Naive thymus-derived CD8-positive, alpha-beta T cell (primary cell): ENCODE measurements at regions of chr4 and their contacts with region 1.

Region 1: DNA sequence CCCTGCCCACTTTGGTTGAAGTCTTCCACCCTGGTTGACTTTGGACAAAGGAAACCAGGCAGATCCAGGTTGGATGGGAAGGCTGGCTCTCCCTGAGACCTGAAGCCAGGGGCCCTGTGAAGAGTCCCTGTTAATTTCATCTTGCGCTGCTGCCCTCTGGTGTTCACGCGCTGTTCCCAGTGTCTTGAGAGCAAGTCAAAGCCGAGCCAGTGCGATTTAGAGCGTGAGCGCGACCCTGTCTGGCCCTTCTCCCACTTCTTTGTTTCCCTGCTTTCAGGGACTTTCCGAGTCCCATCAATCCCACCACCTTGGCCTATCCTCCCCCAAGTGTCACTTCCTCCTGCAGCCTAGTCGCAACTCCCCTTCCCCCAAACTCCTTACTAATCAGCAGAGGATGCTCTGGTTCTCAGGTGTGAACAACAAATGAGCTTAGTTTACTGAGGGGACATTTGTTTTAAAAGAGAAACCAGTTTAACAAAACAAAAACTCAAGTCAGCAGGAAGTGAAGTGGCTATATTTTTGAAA is 25.8 kb upstream of the CHRNA9 start:
- DNase-seq: peak; percentile 81 to 94 (median 87)
- ATAC-seq: peak; percentile 45 to 62
- H3K4me3 Mint-ChIP-seq: peak overlapping the region; percentile 67 to 90 (median 82)
- H3K27ac Mint-ChIP-seq: peak overlapping the region; percentile 97 to 100 (median 99)
- H3K4me1 Mint-ChIP-seq: peaks cover 51 to 86% (median 81%) of the 10 kb centered on the region in 4 donors
- H3K27me3 Mint-ChIP-seq: no peaks in the 10 kb centered on the region

Region 2: GRCh38 chr4:40193016-40193571 is 116.2 kb before region 1 on chr4:
- POLR2A ChIA-PET with region 1: interaction called, 76 read pairs
- DNase-seq: peak in 6 of 10 donors; percentile 51 to 79 (median 74)
- ATAC-seq: peak; percentile 24 to 26
- H3K4me3 Mint-ChIP-seq: peak overlapping the region; percentile 86 to 100 (median 98)
- H3K27ac Mint-ChIP-seq: peak overlapping the region; percentile 94 to 100 (median 99)
- H3K4me1 Mint-ChIP-seq: peaks cover 36 to 83% (median 76%) of the 10 kb centered on the region in 4 donors
- H3K27me3 Mint-ChIP-seq: peaks cover 0 to 1% (median 0%) of the 10 kb centered on the region in 5 donors

Region 3: GRCh38 chr4:40212674-40213527 is 96.4 kb before region 1 on chr4:
- POLR2A ChIA-PET with region 1: interaction called, 22 read pairs
- DNase-seq: no peak
- ATAC-seq: no peak
- H3K4me3 Mint-ChIP-seq: peak overlapping the region; percentile 55 to 100 (median 78)
- H3K27ac Mint-ChIP-seq: peak overlapping the region; percentile 87 to 98 (median 96)
- H3K4me1 Mint-ChIP-seq: peaks cover 51 to 99% (median 94%) of the 10 kb centered on the region in 4 donors
- H3K27me3 Mint-ChIP-seq: no peaks in the 10 kb centered on the region

Region 4: DNA sequence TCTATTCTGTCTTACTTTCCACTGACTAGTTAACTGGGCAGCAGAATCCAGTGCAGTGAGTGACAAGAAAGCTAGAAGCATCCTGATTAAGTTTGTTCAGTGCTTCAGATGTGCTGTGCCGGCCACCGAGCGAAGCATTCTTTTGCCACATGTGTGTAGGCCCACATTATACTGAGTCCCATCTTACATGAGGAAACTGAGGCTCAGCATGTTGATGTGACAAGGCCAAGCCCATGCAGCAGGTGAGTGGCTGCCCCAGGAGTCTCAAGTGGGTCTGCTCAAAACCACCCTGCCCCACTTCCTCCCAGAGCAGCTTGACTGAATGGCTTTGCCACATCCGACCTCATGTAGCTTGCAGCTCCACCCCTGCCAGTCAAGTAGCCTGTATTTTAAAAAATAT is 62.0 kb before region 1 on chr4:
- POLR2A ChIA-PET with region 1: interaction called, 31 read pairs
- DNase-seq: peak in 9 of 10 donors; percentile 52 to 86 (median 70)
- ATAC-seq: peak; percentile 69 to 86
- H3K4me3 Mint-ChIP-seq: peak overlapping the region in 9 of 10 donors; percentile 49 to 84 (median 76)
- H3K27ac Mint-ChIP-seq: peak overlapping the region; percentile 94 to 98 (median 96)
- H3K4me1 Mint-ChIP-seq: peaks cover 53 to 90% (median 82%) of the 10 kb centered on the region in 4 donors
- H3K27me3 Mint-ChIP-seq: no peaks in the 10 kb centered on the region

Region 5: DNA sequence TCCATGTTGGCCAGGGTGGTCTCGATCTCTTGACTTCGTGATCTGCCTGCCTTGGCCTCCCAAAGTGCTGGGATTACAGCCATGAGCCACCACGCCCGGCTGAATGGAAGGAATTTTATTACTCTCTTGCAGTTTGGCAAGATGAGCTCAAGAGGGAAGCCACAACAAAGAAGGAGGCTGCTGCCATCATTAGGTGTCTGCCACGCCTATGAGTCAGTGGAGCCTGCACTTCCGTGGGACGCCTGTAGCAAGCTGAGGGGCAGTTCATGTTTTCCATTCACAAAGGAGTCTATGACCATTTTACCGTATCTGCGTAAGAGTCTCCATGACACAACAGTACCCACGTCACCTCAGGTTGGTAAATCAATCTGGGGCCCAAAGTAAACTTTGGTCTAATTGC is 25.3 kb before region 1 on chr4:
- POLR2A ChIA-PET with region 1: interaction called, 52 read pairs
- DNase-seq: peak; percentile 35 to 89 (median 74)
- ATAC-seq: peak; percentile 89 to 98
- H3K4me3 Mint-ChIP-seq: peak overlapping the region; percentile 29 to 77 (median 68)
- H3K27ac Mint-ChIP-seq: peak overlapping the region; percentile 88 to 98 (median 94)
- H3K4me1 Mint-ChIP-seq: peaks cover 33 to 84% (median 80%) of the 10 kb centered on the region in 4 donors
- H3K27me3 Mint-ChIP-seq: no peaks in the 10 kb centered on the region

Region 6: GRCh38 chr4:41155194-41155830 is 846.0 kb after region 1 on chr4:
- POLR2A ChIA-PET with region 1: no interaction called
- DNase-seq: no peak
- ATAC-seq: no peak
- H3K4me3 Mint-ChIP-seq: no peak overlapping the region
- H3K27ac Mint-ChIP-seq: no peak overlapping the region
- H3K4me1 Mint-ChIP-seq: no peaks in the 10 kb centered on the region
- H3K27me3 Mint-ChIP-seq: peaks cover 1 to 22% (median 5%) of the 10 kb centered on the region in 5 donors